Panc1 (cell line): ENCODE measurements at regions of chr5 and their contacts with region 1.

Region 1: DNA sequence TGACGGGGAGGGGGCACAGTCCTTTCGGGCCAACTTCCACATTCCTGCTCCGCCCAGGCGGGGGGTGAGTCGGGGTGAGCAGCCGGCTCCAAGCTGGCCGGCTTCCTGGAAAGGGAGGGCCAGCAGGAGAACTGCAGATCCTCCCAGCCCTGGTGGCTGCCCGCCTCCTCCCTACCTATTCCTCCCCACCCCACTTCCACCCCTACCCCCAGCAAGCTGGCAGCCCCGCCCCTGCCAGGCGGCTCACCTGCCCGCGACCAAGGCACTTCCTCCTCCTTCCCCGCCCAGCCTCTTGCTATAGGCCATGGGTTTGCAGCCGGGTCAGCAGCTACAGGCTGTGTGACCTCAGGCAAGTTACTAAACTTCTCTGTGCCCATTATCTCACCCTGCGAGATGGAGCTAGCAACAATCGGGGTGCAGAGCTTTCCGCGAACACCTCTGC is 5.6 kb upstream of the IRF1 start:
- DNase-seq: no peak
- ATAC-seq: peak; percentile 68
- H3K4me3 ChIP-seq: peak overlapping the region; percentile 71 to 91
- H3K27ac ChIP-seq: peak overlapping the region; percentile 82
- H3K4me1 ChIP-seq: peaks cover 31% of the 10 kb centered on the region
- H3K27me3 ChIP-seq: no peaks in the 10 kb centered on the region
- CTCF ChIP-seq: no peak

Region 2: GRCh38 chr5:131952301-131952857 is 543.8 kb before region 1 on chr5:
- CTCF ChIA-PET with region 1: no interaction called
- POLR2A ChIA-PET with region 1: no interaction called
- in situ Hi-C with region 1: no loop called
- intact Hi-C with region 1: no loop called
- DNase-seq: no peak
- ATAC-seq: no peak
- H3K4me3 ChIP-seq: no peak overlapping the region
- H3K27ac ChIP-seq: no peak overlapping the region
- H3K4me1 ChIP-seq: no peaks in the 10 kb centered on the region
- H3K27me3 ChIP-seq: no peaks in the 10 kb centered on the region; the same call in 1 of the 2 replicates
- CTCF ChIP-seq: no peak

Region 3: GRCh38 chr5:132386644-132387286 is 109.4 kb before region 1 on chr5:
- CTCF ChIA-PET with region 1: interaction called, 20 read pairs
- POLR2A ChIA-PET with region 1: no interaction called
- in situ Hi-C with region 1: loop called (anchors 25 kb)
- intact Hi-C with region 1: loop called (anchors 1 kb)
- DNase-seq: no peak
- ATAC-seq: peak; percentile 78
- H3K4me3 ChIP-seq: no peak overlapping the region; a peak in 1 of 4 replicates
- H3K27ac ChIP-seq: peak overlapping the region; percentile 76
- H3K4me1 ChIP-seq: peaks cover 40% of the 10 kb centered on the region
- H3K27me3 ChIP-seq: no peaks in the 10 kb centered on the region
- CTCF ChIP-seq: peak; percentile 88

Region 4: DNA sequence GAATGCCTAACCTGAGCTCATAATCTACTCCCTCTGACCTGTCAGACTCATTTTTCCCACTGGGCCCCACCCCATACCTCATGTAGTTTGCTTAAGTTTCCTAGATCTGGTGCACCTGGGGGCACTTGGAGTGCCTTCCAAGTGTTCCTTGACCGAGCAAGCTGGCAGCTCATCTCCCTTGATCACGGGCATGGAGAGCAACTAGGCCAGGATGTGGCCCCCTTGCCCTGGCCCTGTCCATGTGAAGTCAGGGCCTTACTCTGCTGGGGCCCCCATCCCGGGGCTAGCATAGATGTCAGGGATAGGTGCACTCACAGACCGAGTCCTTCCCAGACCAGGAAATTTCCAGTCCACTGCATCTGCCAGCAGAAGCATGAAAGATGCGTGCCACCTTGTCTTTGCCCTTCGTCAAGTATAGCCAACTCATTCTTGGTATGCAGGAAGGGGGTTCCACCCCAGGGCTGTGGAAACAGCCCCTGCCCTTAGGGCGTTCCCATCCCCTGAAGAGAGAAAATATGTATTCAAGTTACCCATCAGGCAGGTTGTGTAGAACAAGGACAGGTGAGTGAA is 84.7 kb before region 1 on chr5:
- CTCF ChIA-PET with region 1: interaction called, 8 read pairs
- POLR2A ChIA-PET with region 1: interaction called, 33 read pairs
- in situ Hi-C with region 1: no loop called
- intact Hi-C with region 1: no loop called
- DNase-seq: no peak
- ATAC-seq: peak; percentile 39
- H3K4me3 ChIP-seq: peak overlapping the region; percentile 53 to 59
- H3K27ac ChIP-seq: peak overlapping the region; percentile 96
- H3K4me1 ChIP-seq: peaks cover 57% of the 10 kb centered on the region
- H3K27me3 ChIP-seq: no peaks in the 10 kb centered on the region
- CTCF ChIP-seq: no peak

Region 5: DNA sequence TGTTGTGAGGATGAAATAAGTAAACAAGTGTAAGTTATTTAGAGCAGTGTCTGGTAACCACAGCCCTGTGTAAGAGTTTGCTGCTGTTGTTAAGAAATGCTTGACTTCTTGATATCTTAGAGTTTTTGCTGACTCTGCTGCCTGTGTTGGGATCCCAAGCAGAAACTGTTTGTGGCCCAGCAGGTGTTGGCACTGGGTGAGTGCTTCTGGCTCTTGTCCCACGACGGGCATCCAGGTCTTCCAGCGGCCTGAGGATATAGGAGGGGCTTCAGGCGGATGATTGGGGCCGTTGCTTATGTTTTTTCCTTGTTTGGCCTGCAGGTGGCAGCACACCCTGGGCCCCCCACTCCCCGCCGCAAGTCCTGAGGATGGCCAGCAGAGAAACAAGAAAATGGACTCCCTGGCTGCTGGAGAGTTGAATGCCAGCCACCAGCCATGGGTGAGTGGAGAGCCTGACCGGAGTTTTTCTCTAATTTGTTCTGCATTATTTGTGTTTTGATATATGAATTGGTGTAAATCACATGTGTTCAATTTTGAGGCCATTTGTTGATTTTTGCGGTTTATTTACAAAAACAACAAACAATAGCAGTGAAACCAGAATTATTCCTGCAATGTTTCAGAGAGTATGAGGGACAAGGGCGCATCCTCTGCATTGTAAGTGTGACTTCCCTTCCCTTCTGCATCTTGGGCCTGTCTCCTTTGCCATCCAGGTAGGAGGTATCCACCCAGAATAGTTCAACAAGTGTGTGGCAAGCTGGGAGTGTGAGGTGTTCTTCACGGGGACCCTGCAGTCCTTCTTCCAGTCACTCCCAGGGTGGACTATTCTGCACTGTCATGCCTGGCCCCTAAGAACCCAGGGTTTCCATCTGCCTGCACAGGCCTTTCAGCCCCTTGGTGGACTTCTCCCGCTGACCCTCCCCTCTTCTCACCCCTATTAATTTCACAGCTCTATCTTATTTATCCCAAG is 76.4 kb before region 1 on chr5:
- CTCF ChIA-PET with region 1: interaction called, 7 read pairs
- POLR2A ChIA-PET with region 1: interaction called, 4 read pairs
- in situ Hi-C with region 1: no loop called
- intact Hi-C with region 1: loop called (anchors 2 kb)
- DNase-seq: no peak
- ATAC-seq: peak; percentile 84
- H3K4me3 ChIP-seq: no peak overlapping the region
- H3K27ac ChIP-seq: peak overlapping the region; percentile 82
- H3K4me1 ChIP-seq: peaks cover 52% of the 10 kb centered on the region
- H3K27me3 ChIP-seq: no peaks in the 10 kb centered on the region
- CTCF ChIP-seq: peak; percentile 95

Region 6: GRCh38 chr5:132530946-132531345 is 34.7 kb after region 1 on chr5:
- CTCF ChIA-PET with region 1: no interaction called
- POLR2A ChIA-PET with region 1: no interaction called
- in situ Hi-C with region 1: no loop called
- intact Hi-C with region 1: no loop called
- DNase-seq: no peak
- ATAC-seq: no peak
- H3K4me3 ChIP-seq: no peak overlapping the region
- H3K27ac ChIP-seq: no peak overlapping the region
- H3K4me1 ChIP-seq: no peaks in the 10 kb centered on the region
- H3K27me3 ChIP-seq: peaks cover 14% of the 10 kb centered on the region; the same call in 1 of the 2 replicates
- CTCF ChIP-seq: no peak

Region 7: DNA sequence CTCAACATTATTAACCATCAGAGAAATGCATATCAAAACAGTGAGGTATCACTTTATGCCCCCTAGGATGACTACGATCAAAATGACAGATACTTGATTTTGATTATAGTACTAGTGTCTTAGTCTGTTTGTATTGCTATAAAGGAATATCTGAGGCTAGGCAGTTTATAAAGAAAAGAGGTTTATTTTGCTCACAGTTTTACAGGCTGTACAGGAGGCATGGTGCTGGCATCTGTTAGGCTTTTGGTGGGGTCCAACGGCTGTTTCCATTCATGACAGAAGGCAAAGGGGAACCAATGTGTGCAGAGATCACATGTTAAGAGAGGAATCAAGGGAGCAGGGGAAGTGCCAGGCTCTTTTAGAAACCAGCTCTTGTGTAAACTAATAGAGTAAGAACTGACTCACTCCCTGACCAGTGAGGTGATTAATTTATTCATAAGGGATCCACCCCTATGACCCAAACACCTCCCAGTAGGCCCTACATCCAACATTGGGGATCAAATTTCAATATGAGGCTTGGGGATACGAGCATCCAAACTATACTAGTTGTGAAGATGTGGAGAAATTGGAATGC is 483.2 kb after region 1 on chr5:
- CTCF ChIA-PET with region 1: no interaction called
- POLR2A ChIA-PET with region 1: no interaction called
- in situ Hi-C with region 1: no loop called
- intact Hi-C with region 1: no loop called
- DNase-seq: peak; percentile 35
- ATAC-seq: peak; percentile 53; the same call in 1 of the 2 replicates
- H3K4me3 ChIP-seq: no peak overlapping the region
- H3K27ac ChIP-seq: no peak overlapping the region
- H3K4me1 ChIP-seq: no peaks in the 10 kb centered on the region
- H3K27me3 ChIP-seq: no peaks in the 10 kb centered on the region
- CTCF ChIP-seq: no peak